ENCODE measurements at regions of chr17 and their contacts with region 1.

Region 1: DNA sequence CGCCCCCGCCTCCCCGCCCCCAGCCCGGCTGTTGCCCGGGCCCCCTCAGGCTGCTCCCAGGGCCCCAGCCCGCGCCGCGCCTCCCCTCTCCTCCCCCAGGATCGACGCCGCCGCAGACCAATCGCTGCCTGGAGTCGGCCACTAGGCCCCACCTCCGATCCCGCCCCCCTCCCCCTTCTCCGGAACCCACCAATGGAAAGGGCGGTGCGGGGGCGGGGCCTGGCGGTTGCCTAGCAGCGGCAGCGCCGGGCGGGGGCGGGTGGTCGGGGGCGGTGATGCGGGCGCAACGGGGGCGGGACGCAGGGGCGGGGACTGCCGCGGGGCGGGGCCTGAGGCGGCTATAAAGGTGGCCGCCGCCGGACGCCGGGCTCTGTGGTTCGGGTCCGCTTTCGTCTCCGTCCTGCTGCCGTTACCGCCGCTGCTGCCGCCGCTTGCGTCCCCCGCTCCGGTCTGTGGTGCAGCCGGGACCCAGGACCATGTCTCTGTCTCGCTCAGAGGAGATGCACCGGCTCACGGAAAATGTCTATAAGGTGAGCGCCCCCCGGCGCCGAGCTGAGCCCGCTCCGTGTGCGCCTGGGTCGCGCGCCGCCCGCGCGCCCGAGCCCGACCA is at the start of gene BAIAP2:
- DNase-seq: peak; percentile 96 to 100 (median 98)
- ATAC-seq: peak; percentile 86
- H3K4me3 ChIP-seq: peak within 1 kb of the TSS; percentile 53 to 60
- H3K4me3 Mint-ChIP-seq: peak within 1 kb of the TSS; percentile 95
- H3K27ac ChIP-seq: peak within 1 kb of the TSS in 1 of 2 experiments; percentile 40
- H3K27ac Mint-ChIP-seq: peak within 1 kb of the TSS; percentile 93
- H3K4me1 ChIP-seq: peaks cover 11% of the 10 kb centered on the region
- H3K4me1 Mint-ChIP-seq: peaks cover 25% of the 10 kb centered on the region
- H3K27me3 ChIP-seq: no peaks in the 10 kb centered on the region
- H3K27me3 Mint-ChIP-seq: no peaks in the 10 kb centered on the region
- CTCF ChIP-seq: no peak
- total RNA-seq, gene BAIAP2: 8.5 to 9.1 TPM

Region 2: GRCh38 chr17:80991645-80992076 is 43.2 kb before region 1 on chr17 and contains the start of gene CHMP6:
- CTCF ChIA-PET with region 1: interaction called, 11 read pairs
- POLR2A ChIA-PET with region 1: interaction called, 3 read pairs
- intact Hi-C with region 1: loop called (anchors 1 to 2 kb)
- DNase-seq: peak; percentile 48 to 86 (median 70)
- ATAC-seq: peak; percentile 69
- H3K4me3 ChIP-seq: peak within 1 kb of the TSS; percentile 74 to 84
- H3K4me3 Mint-ChIP-seq: peak within 1 kb of the TSS; percentile 81
- H3K27ac ChIP-seq: peak within 1 kb of the TSS; percentile 59 to 84
- H3K27ac Mint-ChIP-seq: peak within 1 kb of the TSS; percentile 84
- H3K4me1 ChIP-seq: peaks cover 32% of the 10 kb centered on the region
- H3K4me1 Mint-ChIP-seq: peaks cover 20% of the 10 kb centered on the region
- H3K27me3 ChIP-seq: no peaks in the 10 kb centered on the region
- H3K27me3 Mint-ChIP-seq: no peaks in the 10 kb centered on the region
- CTCF ChIP-seq: no peak
- total RNA-seq, gene CHMP6: 10.6 to 11.5 TPM

Region 3: GRCh38 chr17:81018044-81018802 is 16.7 kb before region 1 on chr17:
- CTCF ChIA-PET with region 1: interaction called, 29 read pairs
- POLR2A ChIA-PET with region 1: interaction called, 6 read pairs
- intact Hi-C with region 1: loop called (anchors 1 kb)
- DNase-seq: peak in 7 of 9 experiments; percentile 23 to 74 (median 50)
- ATAC-seq: peak; percentile 79
- H3K4me3 ChIP-seq: peak overlapping the region; percentile 56 to 62
- H3K4me3 Mint-ChIP-seq: peak overlapping the region; percentile 78
- H3K27ac ChIP-seq: peak overlapping the region; percentile 53 to 87
- H3K27ac Mint-ChIP-seq: peak overlapping the region; percentile 94
- H3K4me1 ChIP-seq: peaks cover 24% of the 10 kb centered on the region
- H3K4me1 Mint-ChIP-seq: peaks cover 32% of the 10 kb centered on the region
- H3K27me3 ChIP-seq: no peaks in the 10 kb centered on the region
- H3K27me3 Mint-ChIP-seq: no peaks in the 10 kb centered on the region
- CTCF ChIP-seq: no peak

Region 4: DNA sequence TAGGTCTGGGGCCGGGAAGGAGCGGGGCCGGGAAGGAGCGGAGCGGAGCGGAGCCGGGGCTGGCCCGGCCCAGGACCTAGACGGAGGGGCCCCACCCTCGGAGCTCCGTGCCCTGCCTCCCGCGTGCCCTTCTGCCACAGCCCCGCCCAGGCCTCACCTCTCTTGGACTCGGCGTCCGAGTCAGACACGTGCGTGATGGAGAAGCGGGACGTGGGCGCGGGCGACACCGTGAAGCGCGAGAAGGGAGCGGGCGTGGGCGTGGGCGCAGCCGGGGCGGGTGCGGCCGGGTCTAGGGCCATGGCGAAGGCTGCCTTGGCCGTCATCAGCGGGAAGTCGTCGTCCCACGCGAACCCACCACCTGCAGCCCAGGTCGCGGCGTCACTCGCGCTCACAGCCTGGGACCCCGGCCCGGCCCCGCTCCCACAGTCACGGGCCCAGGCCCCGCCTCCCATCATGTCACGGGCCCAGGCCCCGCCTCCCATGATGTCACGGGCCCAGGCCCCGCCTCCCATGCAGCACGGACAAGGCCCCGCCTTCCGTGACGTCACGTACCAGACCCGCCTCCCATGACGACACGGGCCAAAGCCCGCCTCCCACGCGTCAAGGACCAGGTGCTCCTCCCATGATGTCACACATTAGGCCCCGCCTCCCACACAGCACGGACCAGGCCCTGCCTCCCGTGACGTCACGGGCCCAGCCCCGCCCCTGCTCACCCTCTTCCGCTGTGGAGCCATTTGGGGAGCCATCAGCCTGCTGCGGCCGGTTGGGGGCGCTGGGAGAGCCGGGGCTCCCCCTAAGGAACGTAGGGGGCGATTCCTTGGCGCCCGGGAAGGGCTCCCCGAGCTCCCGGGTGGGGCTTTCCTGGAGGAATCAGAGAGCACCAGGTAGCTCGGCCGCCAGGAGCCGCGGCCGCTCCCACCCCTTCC is 84.6 kb after region 1 on chr17:
- CTCF ChIA-PET with region 1: no interaction called
- POLR2A ChIA-PET with region 1: no interaction called
- intact Hi-C with region 1: loop called in 1 of 2 experiments (anchors 1 kb)
- DNase-seq: peak; percentile 18 to 94 (median 73)
- ATAC-seq: peak; percentile 87
- H3K4me3 ChIP-seq: peak overlapping the region; percentile 8 to 23
- H3K4me3 Mint-ChIP-seq: peak overlapping the region; percentile 73
- H3K27ac ChIP-seq: no peak overlapping the region
- H3K27ac Mint-ChIP-seq: peak overlapping the region; percentile 91
- H3K4me1 ChIP-seq: peaks cover 6% of the 10 kb centered on the region
- H3K4me1 Mint-ChIP-seq: peaks cover 6% of the 10 kb centered on the region
- H3K27me3 ChIP-seq: no peaks in the 10 kb centered on the region
- H3K27me3 Mint-ChIP-seq: peaks cover 4% of the 10 kb centered on the region
- CTCF ChIP-seq: no peak

Measured in CD8-positive, alpha-beta T cell (primary cell).